OCI-LY7 (cell line): ENCODE measurements at regions of chr9 and their contacts with region 1.

Region 1: DNA sequence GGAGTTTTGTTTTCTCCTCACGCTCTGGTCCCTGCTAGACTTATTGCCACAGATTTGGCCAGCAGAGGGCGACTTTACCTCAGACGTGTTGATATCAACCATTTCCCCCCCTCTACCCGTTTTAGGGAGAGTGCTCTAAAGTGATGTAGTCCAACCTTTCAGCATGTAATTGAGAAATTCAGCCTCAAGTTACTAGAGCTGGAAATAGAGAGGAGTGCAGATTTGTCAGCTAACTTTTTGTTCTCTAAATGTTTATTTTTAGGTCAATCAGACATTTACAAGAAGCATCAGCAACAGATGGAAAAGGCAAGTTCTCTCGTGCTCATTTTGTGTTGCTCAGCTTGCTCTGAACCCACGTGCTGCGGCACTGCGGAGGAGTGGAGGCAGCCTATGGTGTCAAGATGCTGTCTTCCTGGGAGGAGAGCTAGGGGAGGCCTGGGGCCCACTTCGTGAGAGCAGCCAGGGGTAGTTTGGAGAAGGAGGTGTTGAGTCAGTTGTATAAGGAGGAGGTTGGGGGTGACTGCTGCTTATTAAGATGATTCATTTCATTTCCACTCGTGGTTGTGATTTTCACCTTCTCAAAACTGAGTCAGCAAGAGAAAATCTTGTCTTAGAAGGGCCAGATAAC is 53.6 kb downstream of the GPR107 start:
- DNase-seq: peak; percentile 83
- H3K4me3 ChIP-seq: no peak overlapping the region
- H3K27ac ChIP-seq: no peak overlapping the region
- H3K4me1 ChIP-seq: no peaks in the 10 kb centered on the region
- CTCF ChIP-seq: peak; percentile 95

Region 2: GRCh38 chr9:130235897-130236668 is 128.7 kb after region 1 on chr9:
- CTCF ChIA-PET with region 1: interaction called, 5 read pairs
- POLR2A ChIA-PET with region 1: no interaction called
- intact Hi-C with region 1: loop called (anchors 1 kb)
- DNase-seq: peak; percentile 66
- H3K4me3 ChIP-seq: no peak overlapping the region
- H3K27ac ChIP-seq: no peak overlapping the region
- H3K4me1 ChIP-seq: peaks cover 16% of the 10 kb centered on the region
- CTCF ChIP-seq: peak; percentile 99

Region 3: GRCh38 chr9:130343445-130343918 is 236.1 kb after region 1 on chr9:
- CTCF ChIA-PET with region 1: no interaction called
- POLR2A ChIA-PET with region 1: no interaction called
- intact Hi-C with region 1: loop called (anchors 2 kb)
- DNase-seq: peak; percentile 25
- H3K4me3 ChIP-seq: no peak overlapping the region
- H3K27ac ChIP-seq: no peak overlapping the region
- H3K4me1 ChIP-seq: no peaks in the 10 kb centered on the region
- CTCF ChIP-seq: peak; percentile 85

Region 4: DNA sequence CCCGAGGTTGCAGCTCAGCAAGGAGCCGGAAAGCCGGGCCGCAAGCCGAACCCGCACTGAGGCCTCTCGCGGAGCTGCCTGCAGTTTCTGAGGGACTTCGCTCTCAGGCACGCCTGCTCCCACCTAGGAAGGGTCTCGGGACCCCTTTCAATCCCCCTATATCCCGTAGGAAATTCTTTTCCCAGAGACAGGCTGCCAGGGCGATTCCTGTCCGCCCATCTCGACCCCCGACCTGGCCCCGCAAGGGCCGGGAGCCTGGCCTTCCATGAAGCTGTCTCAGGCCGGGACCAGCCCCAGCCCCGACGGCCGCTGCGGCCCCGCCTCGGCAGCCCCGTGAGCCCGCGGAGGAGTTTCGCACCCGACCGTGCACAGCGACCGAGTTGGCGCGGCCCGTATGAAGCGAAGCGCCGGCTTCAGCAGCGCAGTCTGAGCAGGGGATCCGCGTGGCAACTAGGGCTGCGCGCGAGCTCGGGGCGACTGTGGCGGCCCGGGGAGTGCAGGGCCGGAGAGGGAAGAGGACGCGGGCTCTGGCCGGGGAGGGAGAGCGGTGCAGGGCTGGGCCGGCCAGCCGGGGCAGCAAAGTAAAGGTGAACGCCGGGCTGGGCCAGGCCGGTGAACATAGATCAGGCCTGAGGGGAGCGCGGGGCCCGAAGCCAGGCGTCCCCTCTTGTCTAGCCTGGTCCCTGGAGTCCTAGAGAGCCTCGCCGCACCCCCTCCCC is 556.1 kb after region 1 on chr9:
- CTCF ChIA-PET with region 1: no interaction called
- POLR2A ChIA-PET with region 1: no interaction called
- intact Hi-C with region 1: no loop called
- DNase-seq: no peak
- H3K4me3 ChIP-seq: no peak overlapping the region
- H3K27ac ChIP-seq: no peak overlapping the region
- H3K4me1 ChIP-seq: no peaks in the 10 kb centered on the region
- CTCF ChIP-seq: no peak